ENCODE measurements at regions of chr3 and their contacts with region 1.

Region 1: DNA sequence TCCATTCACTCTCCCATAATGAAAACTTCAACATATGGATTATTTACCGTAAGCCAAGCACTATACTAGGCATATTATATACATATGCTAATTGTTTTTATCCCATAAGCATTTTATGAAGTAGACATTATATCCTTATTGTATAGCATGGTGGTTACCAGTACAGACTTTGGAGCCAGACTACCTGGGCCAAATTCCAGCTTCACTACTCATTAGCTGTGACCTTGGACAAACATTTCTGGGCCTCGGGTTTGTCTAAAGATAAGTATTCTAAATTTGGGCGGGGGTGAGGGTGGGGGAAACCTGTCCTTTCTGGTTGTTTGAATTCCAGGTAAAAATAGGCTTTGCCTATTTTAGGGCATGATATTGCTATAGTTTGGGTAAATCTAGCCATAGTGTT is 66.5 kb upstream of the P2RY1 start:
- DNase-seq: no peak
- ATAC-seq: no peak
- H3K4me3 ChIP-seq: no peak overlapping the region
- H3K4me3 Mint-ChIP-seq: no peak overlapping the region
- H3K27ac ChIP-seq: no peak overlapping the region
- H3K27ac Mint-ChIP-seq: no peak overlapping the region
- H3K4me1 ChIP-seq: no peaks in the 10 kb centered on the region
- H3K4me1 Mint-ChIP-seq: no peaks in the 10 kb centered on the region
- H3K27me3 ChIP-seq: no peaks in the 10 kb centered on the region
- H3K27me3 Mint-ChIP-seq: peaks cover 5% of the 10 kb centered on the region
- CTCF ChIP-seq: no peak

Region 2: DNA sequence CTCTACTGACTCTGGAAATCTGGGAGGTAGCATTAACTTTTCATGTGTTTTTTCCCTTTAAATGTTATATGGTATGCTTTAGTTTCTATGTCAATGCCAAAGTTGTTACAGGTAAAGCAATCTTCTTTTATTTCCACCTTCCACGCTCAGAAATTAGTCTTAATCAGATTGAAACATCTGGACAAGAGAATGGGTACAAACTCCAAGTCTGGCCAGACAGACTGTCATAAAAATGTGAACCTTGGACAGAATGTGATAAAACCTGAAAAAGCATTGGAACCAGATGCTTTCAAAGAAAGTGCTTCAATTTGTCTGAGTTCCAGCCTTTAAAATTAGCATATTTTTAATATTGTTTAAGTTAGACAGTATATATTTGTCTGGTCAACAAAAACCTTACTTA is 44.2 kb before region 1 on chr3:
- CTCF ChIA-PET with region 1: no interaction called
- POLR2A ChIA-PET with region 1: no interaction called
- intact Hi-C with region 1: loop called (anchors 1 kb)
- DNase-seq: no peak
- ATAC-seq: no peak
- H3K4me3 ChIP-seq: no peak overlapping the region
- H3K4me3 Mint-ChIP-seq: no peak overlapping the region
- H3K27ac ChIP-seq: no peak overlapping the region
- H3K27ac Mint-ChIP-seq: no peak overlapping the region
- H3K4me1 ChIP-seq: no peaks in the 10 kb centered on the region
- H3K4me1 Mint-ChIP-seq: no peaks in the 10 kb centered on the region
- H3K27me3 ChIP-seq: no peaks in the 10 kb centered on the region
- H3K27me3 Mint-ChIP-seq: peaks cover 23% of the 10 kb centered on the region
- CTCF ChIP-seq: no peak

Region 3: GRCh38 chr3:152785051-152785450 is 16.6 kb after region 1 on chr3:
- CTCF ChIA-PET with region 1: no interaction called
- POLR2A ChIA-PET with region 1: no interaction called
- intact Hi-C with region 1: no loop called
- DNase-seq: no peak
- ATAC-seq: no peak
- H3K4me3 ChIP-seq: no peak overlapping the region
- H3K4me3 Mint-ChIP-seq: no peak overlapping the region
- H3K27ac ChIP-seq: no peak overlapping the region
- H3K27ac Mint-ChIP-seq: no peak overlapping the region
- H3K4me1 ChIP-seq: no peaks in the 10 kb centered on the region
- H3K4me1 Mint-ChIP-seq: no peaks in the 10 kb centered on the region
- H3K27me3 ChIP-seq: no peaks in the 10 kb centered on the region
- H3K27me3 Mint-ChIP-seq: no peaks in the 10 kb centered on the region
- CTCF ChIP-seq: no peak